ENCODE measurements at regions of chr6 and their contacts with region 1.

Region 1: DNA sequence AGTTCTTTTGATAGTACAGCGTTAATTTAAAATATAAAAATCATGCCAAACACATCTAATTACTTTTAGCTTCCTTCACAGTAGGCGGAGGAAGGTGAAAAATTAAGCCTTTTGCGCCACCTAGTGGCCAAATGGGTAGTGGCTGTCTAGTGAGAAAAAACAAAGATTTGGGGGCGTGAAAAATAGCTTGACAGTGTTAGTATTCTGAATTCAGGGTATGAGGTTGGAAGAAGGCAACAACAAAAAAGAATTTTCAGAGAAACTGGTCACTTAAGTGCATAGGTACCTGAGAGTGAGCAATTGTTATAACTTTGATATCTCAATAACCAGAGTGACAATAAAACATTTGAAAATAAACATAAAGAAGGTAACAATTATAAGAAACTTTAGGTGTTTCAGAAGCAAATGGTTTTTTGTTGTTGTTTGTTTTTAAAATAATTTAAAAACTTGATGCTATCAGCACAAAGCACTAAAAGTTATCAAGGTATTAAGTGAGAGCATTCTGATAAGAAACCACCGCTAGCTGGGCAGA is 14.3 kb downstream of the PSMB9 start:
- DNase-seq: peak; percentile 58
- H3K4me3 ChIP-seq: no peak overlapping the region; a peak in 1 of 4 replicates
- H3K27ac ChIP-seq: no peak overlapping the region
- H3K4me1 ChIP-seq: no peaks in the 10 kb centered on the region
- H3K27me3 ChIP-seq: peaks cover 33% of the 10 kb centered on the region
- CTCF ChIP-seq: peak; percentile 97
- EP300 ChIP-seq: no peak
- RAD21 ChIP-seq: peak; percentile 88

Region 2: GRCh38 chr6:32785781-32786533 is 82.4 kb before region 1 on chr6:
- CTCF ChIA-PET with region 1: interaction called, 10 read pairs
- POLR2A ChIA-PET with region 1: no interaction called
- DNase-seq: peak; percentile 37
- H3K4me3 ChIP-seq: no peak overlapping the region
- H3K27ac ChIP-seq: no peak overlapping the region
- H3K4me1 ChIP-seq: no peaks in the 10 kb centered on the region
- H3K27me3 ChIP-seq: peaks cover 8% of the 10 kb centered on the region; the same call in 1 of the 2 replicates
- CTCF ChIP-seq: peak; percentile 67
- EP300 ChIP-seq: no peak
- RAD21 ChIP-seq: peak; percentile 68

Region 3: DNA sequence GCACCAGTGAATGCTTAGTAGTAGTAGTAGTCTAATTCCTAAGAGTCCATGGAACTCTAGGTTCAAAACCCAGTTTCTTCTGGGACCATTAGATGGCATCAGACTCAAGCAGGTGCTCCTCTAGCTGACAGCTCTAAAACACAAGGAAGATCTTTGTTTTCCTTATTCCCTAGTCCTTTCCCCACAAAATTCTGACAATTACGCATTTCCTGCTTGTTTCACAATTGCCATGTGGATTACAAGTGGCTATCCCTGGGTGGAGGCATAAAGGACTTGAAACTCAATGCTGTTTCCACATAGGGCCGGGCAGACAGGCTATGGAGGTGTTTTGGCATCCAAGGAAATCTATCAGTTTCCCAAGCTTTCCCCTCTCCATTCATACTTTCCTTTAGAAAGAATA is 42.4 kb before region 1 on chr6:
- CTCF ChIA-PET with region 1: interaction called, 76 read pairs
- POLR2A ChIA-PET with region 1: no interaction called
- DNase-seq: no peak
- H3K4me3 ChIP-seq: no peak overlapping the region
- H3K27ac ChIP-seq: no peak overlapping the region
- H3K4me1 ChIP-seq: no peaks in the 10 kb centered on the region
- H3K27me3 ChIP-seq: no peaks in the 10 kb centered on the region; the same call in 1 of the 2 replicates
- CTCF ChIP-seq: peak; percentile 46
- EP300 ChIP-seq: no peak
- RAD21 ChIP-seq: peak; percentile 61

Region 4: GRCh38 chr6:32853541-32854375 is 14.6 kb before region 1 on chr6 and contains the starts of genes PSMB9 and TAP1:
- CTCF ChIA-PET with region 1: interaction called, 137 read pairs
- POLR2A ChIA-PET with region 1: interaction called, 3 read pairs
- DNase-seq: peak; percentile 87
- H3K4me3 ChIP-seq: peak within 1 kb of the TSS; percentile 88 to 89
- H3K27ac ChIP-seq: peak within 1 kb of the TSS; percentile 83 to 90
- H3K4me1 ChIP-seq: peaks cover 0 to 14% of the 10 kb centered on the region in 2 experiments; a peak in 1 of 4 replicates
- H3K27me3 ChIP-seq: no peaks in the 10 kb centered on the region
- CTCF ChIP-seq: peak; percentile 64
- EP300 ChIP-seq: no peak
- RAD21 ChIP-seq: peak; percentile 46
- polyA plus RNA-seq, gene PSMB9: 52.4 and 83.7 TPM in 2 replicates
- polyA plus RNA-seq, gene TAP1: 31.1 and 35.7 TPM in 2 replicates

Region 5: GRCh38 chr6:32933636-32934085 is 65.3 kb after region 1 on chr6:
- CTCF ChIA-PET with region 1: interaction called, 10 read pairs
- POLR2A ChIA-PET with region 1: no interaction called
- DNase-seq: peak; percentile 66
- H3K4me3 ChIP-seq: peak overlapping the region in 1 of 2 experiments; percentile 27; a peak in 1 of 4 replicates
- H3K27ac ChIP-seq: no peak overlapping the region
- H3K4me1 ChIP-seq: no peaks in the 10 kb centered on the region
- H3K27me3 ChIP-seq: peaks cover 34% of the 10 kb centered on the region; the same call in 1 of the 2 replicates
- CTCF ChIP-seq: peak; percentile 86
- EP300 ChIP-seq: no peak
- RAD21 ChIP-seq: peak; percentile 76

Region 6: GRCh38 chr6:32984605-32985389 is 116.5 kb after region 1 on chr6:
- CTCF ChIA-PET with region 1: interaction called, 21 read pairs
- POLR2A ChIA-PET with region 1: no interaction called
- DNase-seq: peak; percentile 79
- H3K4me3 ChIP-seq: no peak overlapping the region; a peak in 1 of 4 replicates
- H3K27ac ChIP-seq: no peak overlapping the region; a peak in 1 of 4 replicates
- H3K4me1 ChIP-seq: no peaks in the 10 kb centered on the region; a peak in 2 of 4 replicates
- H3K27me3 ChIP-seq: no peaks in the 10 kb centered on the region
- CTCF ChIP-seq: peak; percentile 87
- EP300 ChIP-seq: no peak
- RAD21 ChIP-seq: peak; percentile 95

Measured in SK-N-SH (cell line).